ENCODE measurements at regions of chr17 and their contacts with region 1.

Region 1: GRCh38 chr17:67707442-67707841 is 10.3 kb upstream of the NOL11 start:
- DNase-seq: no peak
- CTCF ChIP-seq: no peak

Region 2: DNA sequence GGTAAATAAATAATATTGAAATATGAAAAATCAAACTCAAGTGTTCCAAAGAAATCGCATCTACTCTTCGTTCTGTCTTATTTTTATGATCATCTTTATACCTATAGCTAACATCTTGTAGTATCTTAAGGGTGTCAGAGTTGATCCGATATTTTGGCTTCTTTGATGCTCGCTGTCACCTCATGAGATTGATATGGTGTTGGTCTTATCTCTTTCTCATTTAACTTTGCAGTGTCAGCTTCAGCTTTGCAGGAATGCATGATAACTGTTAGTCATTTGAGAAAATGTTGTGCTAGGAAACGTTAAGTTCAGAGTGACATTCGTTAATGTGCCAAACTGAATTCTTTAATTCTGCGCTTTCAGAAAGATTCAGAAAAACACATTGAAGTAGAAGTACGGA is 29.7 kb after region 1 on chr17:
- CTCF ChIA-PET with region 1: no interaction called
- POLR2A ChIA-PET with region 1: interaction called, 10 read pairs
- DNase-seq: no peak
- CTCF ChIP-seq: no peak